CD4-positive, alpha-beta T cell (primary cell): ENCODE measurements at regions of chr2 and their contacts with region 1.

Region 1: GRCh38 chr2:101823347-101823791 is 125.9 kb downstream of the MAP4K4 start:
- DNase-seq: peak; percentile 48 to 85 (median 65)
- ATAC-seq: peak; percentile 89
- H3K4me3 ChIP-seq: no peak overlapping the region
- H3K4me3 Mint-ChIP-seq: peak overlapping the region; percentile 12
- H3K27ac ChIP-seq: peak overlapping the region in 1 of 2 donors; percentile 38
- H3K27ac Mint-ChIP-seq: peak overlapping the region; percentile 81
- H3K4me1 ChIP-seq: peaks cover 37% of the 10 kb centered on the region
- H3K4me1 Mint-ChIP-seq: peaks cover 76% of the 10 kb centered on the region
- H3K27me3 ChIP-seq: no peaks in the 10 kb centered on the region
- H3K27me3 Mint-ChIP-seq: no peaks in the 10 kb centered on the region
- CTCF ChIP-seq: peak; percentile 88

Region 2: GRCh38 chr2:101524806-101525430 is 298.5 kb before region 1 on chr2:
- CTCF ChIA-PET with region 1: no interaction called
- POLR2A ChIA-PET with region 1: no interaction called
- intact Hi-C with region 1: no loop called
- DNase-seq: peak in 1 of 14 experiments; percentile 15
- ATAC-seq: no peak
- H3K4me3 ChIP-seq: no peak overlapping the region
- H3K4me3 Mint-ChIP-seq: no peak overlapping the region
- H3K27ac ChIP-seq: no peak overlapping the region
- H3K27ac Mint-ChIP-seq: no peak overlapping the region
- H3K4me1 ChIP-seq: peaks cover 4% of the 10 kb centered on the region
- H3K4me1 Mint-ChIP-seq: no peaks in the 10 kb centered on the region
- H3K27me3 ChIP-seq: no peaks in the 10 kb centered on the region
- H3K27me3 Mint-ChIP-seq: no peaks in the 10 kb centered on the region
- CTCF ChIP-seq: no peak

Region 3: DNA sequence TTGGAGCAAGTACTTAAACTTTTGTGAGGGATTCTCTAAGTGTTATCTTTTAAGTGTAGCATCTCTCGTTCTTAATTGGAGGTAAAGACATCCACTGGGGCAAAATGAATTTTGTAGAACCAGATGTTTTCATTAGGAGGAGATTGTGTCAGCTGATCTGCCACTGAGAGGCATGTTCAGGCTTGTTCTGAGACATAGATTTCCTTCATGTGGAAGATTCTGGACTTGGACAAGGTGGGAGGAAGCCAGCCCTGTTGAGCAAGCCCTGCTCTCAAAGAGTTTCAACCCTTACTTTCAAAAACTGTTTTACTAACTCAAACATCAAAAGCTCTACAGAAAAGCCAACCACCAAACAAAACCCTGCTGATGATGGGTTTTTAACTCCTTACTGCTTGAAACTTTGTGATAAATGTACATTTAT is 119.3 kb before region 1 on chr2:
- CTCF ChIA-PET with region 1: no interaction called
- POLR2A ChIA-PET with region 1: interaction called, 12 read pairs
- intact Hi-C with region 1: loop called (anchors 2 kb)
- DNase-seq: peak in 5 of 14 experiments; percentile 23 to 61 (median 54)
- ATAC-seq: peak; percentile 36
- H3K4me3 ChIP-seq: peak overlapping the region; percentile 39
- H3K4me3 Mint-ChIP-seq: peak overlapping the region; percentile 89
- H3K27ac ChIP-seq: peak overlapping the region; percentile 58 to 67
- H3K27ac Mint-ChIP-seq: no peak overlapping the region
- H3K4me1 ChIP-seq: peaks cover 70% of the 10 kb centered on the region
- H3K4me1 Mint-ChIP-seq: peaks cover 63% of the 10 kb centered on the region
- H3K27me3 ChIP-seq: no peaks in the 10 kb centered on the region
- H3K27me3 Mint-ChIP-seq: no peaks in the 10 kb centered on the region
- CTCF ChIP-seq: no peak

Region 4: DNA sequence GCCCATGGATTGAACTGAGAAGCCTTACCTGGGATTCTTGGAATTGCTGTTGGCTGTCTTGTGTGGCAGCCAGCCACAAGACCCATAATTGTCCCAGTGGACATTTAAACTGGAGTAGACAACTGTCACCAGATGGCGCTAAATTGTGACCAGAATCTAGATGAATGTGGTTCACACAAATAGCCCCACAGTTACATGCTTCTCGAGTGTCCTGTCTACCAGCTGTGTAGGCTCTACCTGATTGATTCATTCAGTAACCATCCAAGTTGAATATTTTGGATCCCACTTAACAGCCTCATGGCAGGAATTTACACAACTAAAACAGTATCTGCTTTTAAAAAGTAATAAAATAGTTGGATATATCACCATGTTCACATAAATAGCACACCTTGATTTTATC is 52.6 kb before region 1 on chr2:
- CTCF ChIA-PET with region 1: interaction called, 4 read pairs
- POLR2A ChIA-PET with region 1: interaction called, 4 read pairs
- intact Hi-C with region 1: loop called (anchors 5 to 10 kb)
- DNase-seq: peak in 3 of 14 experiments; percentile 20 to 49 (median 45)
- ATAC-seq: no peak
- H3K4me3 ChIP-seq: no peak overlapping the region
- H3K4me3 Mint-ChIP-seq: peak overlapping the region; percentile 59
- H3K27ac ChIP-seq: no peak overlapping the region
- H3K27ac Mint-ChIP-seq: peak overlapping the region; percentile 81
- H3K4me1 ChIP-seq: peaks cover 62% of the 10 kb centered on the region
- H3K4me1 Mint-ChIP-seq: peaks cover 95% of the 10 kb centered on the region
- H3K27me3 ChIP-seq: no peaks in the 10 kb centered on the region
- H3K27me3 Mint-ChIP-seq: no peaks in the 10 kb centered on the region
- CTCF ChIP-seq: no peak

Region 5: GRCh38 chr2:101776172-101777043 is 47.0 kb before region 1 on chr2:
- CTCF ChIA-PET with region 1: no interaction called
- POLR2A ChIA-PET with region 1: no interaction called
- intact Hi-C with region 1: loop called in 1 of 2 experiments (anchors 5 kb)
- DNase-seq: no peak
- ATAC-seq: no peak
- H3K4me3 ChIP-seq: no peak overlapping the region
- H3K4me3 Mint-ChIP-seq: no peak overlapping the region
- H3K27ac ChIP-seq: no peak overlapping the region
- H3K27ac Mint-ChIP-seq: no peak overlapping the region
- H3K4me1 ChIP-seq: peaks cover 59% of the 10 kb centered on the region
- H3K4me1 Mint-ChIP-seq: peaks cover 94% of the 10 kb centered on the region
- H3K27me3 ChIP-seq: no peaks in the 10 kb centered on the region
- H3K27me3 Mint-ChIP-seq: no peaks in the 10 kb centered on the region
- CTCF ChIP-seq: no peak

Region 6: GRCh38 chr2:101793277-101793969 is 29.9 kb before region 1 on chr2:
- CTCF ChIA-PET with region 1: interaction called, 3 read pairs
- POLR2A ChIA-PET with region 1: no interaction called
- intact Hi-C with region 1: loop called in 1 of 2 experiments (anchors 5 kb)
- DNase-seq: peak in 5 of 14 experiments; percentile 9 to 36 (median 31)
- ATAC-seq: peak; percentile 39
- H3K4me3 ChIP-seq: no peak overlapping the region
- H3K4me3 Mint-ChIP-seq: no peak overlapping the region
- H3K27ac ChIP-seq: no peak overlapping the region
- H3K27ac Mint-ChIP-seq: peak overlapping the region; percentile 13
- H3K4me1 ChIP-seq: peaks cover 19% of the 10 kb centered on the region
- H3K4me1 Mint-ChIP-seq: peaks cover 92% of the 10 kb centered on the region
- H3K27me3 ChIP-seq: no peaks in the 10 kb centered on the region
- H3K27me3 Mint-ChIP-seq: no peaks in the 10 kb centered on the region
- CTCF ChIP-seq: no peak